ENCODE measurements at regions of chr3 and their contacts with region 1.

Region 1: GRCh38 chr3:33773637-33774036 is 24.8 kb upstream of the PDCD6IP start:
- DNase-seq: no peak
- H3K4me3 Mint-ChIP-seq: no peak overlapping the region
- H3K27ac Mint-ChIP-seq: no peak overlapping the region
- H3K4me1 Mint-ChIP-seq: no peaks in the 10 kb centered on the region
- H3K27me3 Mint-ChIP-seq: no peaks in the 10 kb centered on the region

Region 2: GRCh38 chr3:33496449-33496848 is 277.2 kb before region 1 on chr3:
- CTCF ChIA-PET with region 1: no interaction called
- intact Hi-C with region 1: no loop called
- DNase-seq: no peak
- H3K4me3 Mint-ChIP-seq: no peak overlapping the region
- H3K27ac Mint-ChIP-seq: no peak overlapping the region
- H3K4me1 Mint-ChIP-seq: no peaks in the 10 kb centered on the region
- H3K27me3 Mint-ChIP-seq: no peaks in the 10 kb centered on the region

Region 3: DNA sequence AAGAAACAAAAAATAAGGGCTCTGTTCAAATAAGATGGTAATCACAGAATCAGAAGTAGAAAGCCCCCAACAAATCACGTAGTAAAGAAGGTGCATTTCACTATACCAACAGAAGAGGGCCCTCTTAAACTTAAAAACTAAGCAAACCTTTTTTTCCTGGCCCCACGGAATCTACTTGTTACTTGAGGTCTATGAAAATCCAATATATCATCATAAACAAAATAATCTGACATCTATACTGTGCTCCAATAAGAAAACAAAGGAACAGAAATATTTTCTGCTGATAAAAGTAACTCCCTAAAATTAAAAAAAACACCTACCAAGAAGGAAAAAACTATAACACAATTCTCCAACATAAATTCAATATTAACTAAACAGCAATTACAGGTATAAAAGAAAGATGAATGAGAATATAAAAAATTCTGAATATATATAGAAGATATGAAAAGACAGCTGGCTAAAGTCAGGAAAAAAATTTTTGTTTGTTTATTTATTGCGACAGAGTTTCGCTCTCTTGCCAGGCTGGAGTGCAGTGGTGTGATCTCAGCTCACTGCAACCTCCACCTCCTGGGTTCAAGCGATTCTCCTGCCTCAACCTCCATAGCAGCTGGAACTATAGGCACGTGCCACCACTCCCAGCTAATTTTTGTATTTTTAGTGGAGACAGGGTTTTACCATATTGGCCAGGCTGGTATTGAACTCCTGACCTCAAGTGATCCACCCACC is 137.3 kb before region 1 on chr3:
- CTCF ChIA-PET with region 1: interaction called, 7 read pairs
- intact Hi-C with region 1: loop called (anchors 1 kb)
- DNase-seq: no peak
- H3K4me3 Mint-ChIP-seq: no peak overlapping the region
- H3K27ac Mint-ChIP-seq: no peak overlapping the region
- H3K4me1 Mint-ChIP-seq: no peaks in the 10 kb centered on the region
- H3K27me3 Mint-ChIP-seq: no peaks in the 10 kb centered on the region

Region 4: DNA sequence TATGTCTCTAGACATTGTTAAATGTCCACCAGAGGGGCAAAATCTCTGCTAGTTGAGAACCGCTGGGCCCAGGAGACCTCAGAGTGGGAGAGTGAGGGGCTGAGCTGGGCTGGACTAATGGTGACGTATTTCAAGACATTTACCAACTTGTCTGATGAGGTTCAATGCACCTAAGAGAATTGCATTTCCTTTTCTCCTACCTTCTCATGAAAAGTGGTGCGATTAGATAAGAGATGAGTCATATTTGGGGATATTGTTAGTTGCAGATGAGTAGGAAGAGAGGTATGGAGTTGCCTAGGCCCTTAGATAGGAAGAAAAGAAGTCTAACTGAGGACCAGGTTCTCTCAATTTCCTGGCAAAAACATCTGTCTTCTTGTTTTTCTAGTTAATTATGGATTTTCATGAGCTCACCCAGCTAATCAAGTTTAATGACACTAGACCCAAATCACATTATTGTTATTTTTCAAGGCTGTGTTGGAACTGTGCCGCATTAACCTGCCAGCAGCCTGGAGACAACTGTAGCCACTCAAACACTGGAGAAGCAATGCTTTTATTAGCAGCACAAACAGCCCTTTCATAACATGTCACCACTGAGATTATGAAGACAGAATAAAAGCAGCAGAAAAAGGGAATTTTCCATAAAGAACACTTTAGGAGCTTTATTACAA is 169.0 kb after region 1 on chr3:
- CTCF ChIA-PET with region 1: no interaction called
- intact Hi-C with region 1: no loop called
- DNase-seq: no peak
- H3K4me3 Mint-ChIP-seq: no peak overlapping the region
- H3K27ac Mint-ChIP-seq: no peak overlapping the region
- H3K4me1 Mint-ChIP-seq: peaks cover 3% of the 10 kb centered on the region
- H3K27me3 Mint-ChIP-seq: no peaks in the 10 kb centered on the region